Ovary (tissue), 10 donors: ENCODE measurements at regions of chr3 and their contacts with region 1.

Region 1: DNA sequence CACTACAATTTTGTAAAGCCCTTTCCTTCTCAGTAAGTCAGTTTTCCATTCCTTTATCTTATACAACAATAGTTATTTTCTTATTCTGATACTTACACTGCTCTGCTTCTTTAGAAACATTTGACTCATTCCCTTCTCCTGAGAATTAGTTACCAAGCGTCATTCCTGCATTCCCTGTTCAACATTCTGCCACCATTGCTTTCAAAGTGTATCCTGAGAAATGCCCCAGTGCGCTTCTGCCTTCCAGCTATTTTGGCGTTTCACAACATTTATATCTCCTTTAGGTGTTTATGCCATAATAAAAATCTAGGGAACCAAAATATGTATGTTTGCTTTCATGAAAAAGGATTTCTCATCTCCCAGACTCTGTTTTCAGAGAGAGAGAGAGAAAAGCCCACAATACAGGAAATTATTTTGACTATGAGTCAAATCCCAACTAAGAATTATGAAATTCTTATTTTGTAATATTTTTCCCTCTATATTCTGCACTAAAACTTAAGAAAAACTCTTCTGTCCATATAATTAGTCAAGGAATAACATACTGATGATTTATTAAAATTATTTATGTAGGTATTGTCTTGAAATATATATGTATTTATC is 118.2 kb upstream of the RAP2B start:
- DNase-seq: no peak
- H3K4me3 ChIP-seq: no peak overlapping the region
- H3K27ac ChIP-seq: no peak overlapping the region
- H3K4me1 ChIP-seq: peaks cover 2% of the 10 kb centered on the region
- H3K27me3 ChIP-seq: no peaks in the 10 kb centered on the region
- CTCF ChIP-seq: no peak
- EP300 ChIP-seq: no peak
- POLR2A ChIP-seq: no peak

Region 2: DNA sequence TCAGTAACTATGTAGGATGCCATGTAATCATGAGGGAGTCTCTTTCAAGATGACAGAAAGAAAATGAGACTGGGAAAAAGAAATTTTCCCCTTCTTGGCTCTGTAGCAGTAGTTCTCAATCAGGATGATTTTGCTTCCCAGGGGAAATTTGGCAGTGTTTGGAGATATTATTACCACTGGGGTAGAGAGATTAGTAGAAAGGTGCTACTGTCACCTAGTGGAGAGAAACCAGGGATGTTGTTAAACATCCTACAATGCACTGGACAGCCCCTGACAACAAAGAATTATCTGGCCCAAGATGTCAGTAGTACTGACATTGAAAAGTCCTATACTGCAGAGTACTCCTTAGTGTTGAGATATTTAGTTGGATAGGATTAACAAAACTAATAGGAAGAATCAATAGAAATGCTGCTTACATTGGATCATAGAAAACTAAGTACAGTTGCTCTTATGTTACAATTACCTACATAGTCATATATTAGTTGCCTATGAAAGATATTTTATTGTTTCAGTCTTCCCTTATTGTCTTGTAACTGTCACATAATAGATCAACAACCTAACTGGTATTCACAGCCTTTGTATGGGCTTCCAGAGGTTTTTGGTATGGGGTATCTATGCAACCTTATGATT is 551.5 kb after region 1 on chr3:
- intact Hi-C with region 1: loop called in 1 of 4 experiments (anchors 10 kb)
- DNase-seq: no peak
- H3K4me3 ChIP-seq: no peak overlapping the region
- H3K27ac ChIP-seq: no peak overlapping the region
- H3K4me1 ChIP-seq: peaks cover 2% of the 10 kb centered on the region
- H3K27me3 ChIP-seq: no peaks in the 10 kb centered on the region
- CTCF ChIP-seq: peak in 2 of 3 donors; percentile 39 to 46
- EP300 ChIP-seq: no peak
- POLR2A ChIP-seq: no peak

Region 3: GRCh38 chr3:153768561-153769469 is 725.0 kb after region 1 on chr3:
- intact Hi-C with region 1: loop called in 1 of 4 experiments (anchors 10 kb)
- DNase-seq: peak in 2 of 5 donors; percentile 17 to 19
- H3K4me3 ChIP-seq: no peak overlapping the region
- H3K27ac ChIP-seq: no peak overlapping the region
- H3K4me1 ChIP-seq: no peaks in the 10 kb centered on the region
- H3K27me3 ChIP-seq: no peaks in the 10 kb centered on the region
- CTCF ChIP-seq: peak in 2 of 3 donors; percentile 33 to 53
- EP300 ChIP-seq: no peak
- POLR2A ChIP-seq: no peak

Region 4: DNA sequence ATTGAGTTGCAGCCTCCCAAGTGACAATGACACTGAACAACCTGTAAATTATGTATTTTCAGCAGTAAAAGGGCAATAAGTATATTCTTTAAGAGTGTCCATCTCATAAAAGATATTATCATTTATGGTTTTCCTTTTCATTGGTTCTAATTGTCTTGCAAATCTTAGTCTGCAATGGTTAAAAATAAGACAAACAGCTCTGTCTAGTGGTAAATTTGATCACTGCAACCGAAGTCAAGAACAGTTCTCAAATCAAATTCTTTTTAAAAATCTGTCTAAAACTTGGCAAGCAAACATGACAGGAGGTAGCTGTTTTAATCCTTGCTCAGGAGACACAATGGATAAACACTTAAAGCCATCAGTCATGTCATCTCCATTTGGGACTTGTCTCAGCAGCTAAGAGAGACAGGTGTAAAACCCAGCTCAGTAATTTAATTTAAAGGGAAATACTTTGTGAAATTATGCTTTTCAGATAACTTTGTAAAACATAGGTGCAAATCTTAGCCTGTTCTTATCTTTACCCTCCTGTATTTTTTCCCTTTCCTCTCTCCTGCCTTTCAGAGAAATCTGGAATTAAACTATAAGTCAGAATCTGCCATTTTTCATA is 927.0 kb after region 1 on chr3:
- intact Hi-C with region 1: loop called in 1 of 4 experiments (anchors 10 kb)
- DNase-seq: no peak
- H3K4me3 ChIP-seq: no peak overlapping the region
- H3K27ac ChIP-seq: no peak overlapping the region
- H3K4me1 ChIP-seq: no peaks in the 10 kb centered on the region
- H3K27me3 ChIP-seq: no peaks in the 10 kb centered on the region
- CTCF ChIP-seq: no peak
- EP300 ChIP-seq: no peak
- POLR2A ChIP-seq: no peak